Activated CD8-positive, alpha-beta memory T cell treated with anti-CD3 and anti-CD28 coated beads, Interleukin-2, amount 10 ng/mL, durations not matched to agents 7 days and 5 days (primary cell): ENCODE measurements at regions of chr16 and their contacts with region 1.

Region 1: GRCh38 chr16:8655184-8655717 is 19.2 kb upstream of the ABAT start:
- DNase-seq: peak; percentile 64
- ATAC-seq: peak; percentile 80
- H3K4me3 Mint-ChIP-seq: no peak overlapping the region
- H3K27ac Mint-ChIP-seq: no peak overlapping the region
- H3K4me1 Mint-ChIP-seq: peaks cover 7% of the 10 kb centered on the region
- H3K27me3 Mint-ChIP-seq: no peaks in the 10 kb centered on the region

Region 2: GRCh38 chr16:8567750-8568617 is 87.3 kb before region 1 on chr16:
- CTCF ChIA-PET with region 1: interaction called, 22 read pairs
- DNase-seq: peak; percentile 83
- ATAC-seq: peak; percentile 91
- H3K4me3 Mint-ChIP-seq: no peak overlapping the region
- H3K27ac Mint-ChIP-seq: peak overlapping the region; percentile 10
- H3K4me1 Mint-ChIP-seq: peaks cover 5% of the 10 kb centered on the region
- H3K27me3 Mint-ChIP-seq: peaks cover 2% of the 10 kb centered on the region

Region 3: DNA sequence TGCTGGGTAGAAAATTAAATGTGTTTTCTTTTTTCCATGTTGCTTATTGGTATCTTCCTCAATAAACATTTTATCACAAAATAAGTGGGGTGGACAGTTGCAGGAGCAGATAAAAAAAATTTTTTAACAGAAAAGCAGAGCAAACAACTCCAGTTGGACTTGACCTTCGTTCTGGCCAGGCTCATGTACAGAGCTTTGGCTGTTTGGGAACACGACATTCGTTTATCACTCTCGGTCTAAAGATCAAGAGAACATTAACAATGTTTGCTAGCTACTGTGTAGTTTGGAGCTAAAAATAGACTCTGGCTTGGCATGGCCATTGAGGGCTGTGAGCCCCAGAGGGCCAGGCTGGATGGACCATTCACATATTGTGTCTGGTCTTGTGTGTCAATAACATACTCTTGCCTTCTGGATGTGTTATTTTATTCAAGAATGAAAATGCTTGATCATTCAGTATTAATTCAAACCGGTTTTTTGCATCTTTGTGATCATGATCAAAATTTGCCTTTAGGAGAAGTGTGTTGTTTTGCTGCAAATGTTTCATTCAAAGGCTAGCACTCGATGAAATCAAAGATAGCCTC is 85.6 kb after region 1 on chr16:
- CTCF ChIA-PET with region 1: no interaction called
- DNase-seq: no peak
- ATAC-seq: no peak
- H3K4me3 Mint-ChIP-seq: no peak overlapping the region
- H3K27ac Mint-ChIP-seq: no peak overlapping the region
- H3K4me1 Mint-ChIP-seq: no peaks in the 10 kb centered on the region
- H3K27me3 Mint-ChIP-seq: no peaks in the 10 kb centered on the region

Region 4: GRCh38 chr16:8781797-8782196 is 126.5 kb after region 1 on chr16:
- CTCF ChIA-PET with region 1: no interaction called
- DNase-seq: no peak
- ATAC-seq: no peak
- H3K4me3 Mint-ChIP-seq: no peak overlapping the region
- H3K27ac Mint-ChIP-seq: no peak overlapping the region
- H3K4me1 Mint-ChIP-seq: no peaks in the 10 kb centered on the region
- H3K27me3 Mint-ChIP-seq: no peaks in the 10 kb centered on the region